Activated naive CD8-positive, alpha-beta T cell treated with anti-CD3 and anti-CD28 coated beads, Interleukin-2, amount 10 ng/mL, durations not matched to agents 7 days and 5 days (primary cell): ENCODE measurements at regions of chr1 and their contacts with region 1.

Region 1: DNA sequence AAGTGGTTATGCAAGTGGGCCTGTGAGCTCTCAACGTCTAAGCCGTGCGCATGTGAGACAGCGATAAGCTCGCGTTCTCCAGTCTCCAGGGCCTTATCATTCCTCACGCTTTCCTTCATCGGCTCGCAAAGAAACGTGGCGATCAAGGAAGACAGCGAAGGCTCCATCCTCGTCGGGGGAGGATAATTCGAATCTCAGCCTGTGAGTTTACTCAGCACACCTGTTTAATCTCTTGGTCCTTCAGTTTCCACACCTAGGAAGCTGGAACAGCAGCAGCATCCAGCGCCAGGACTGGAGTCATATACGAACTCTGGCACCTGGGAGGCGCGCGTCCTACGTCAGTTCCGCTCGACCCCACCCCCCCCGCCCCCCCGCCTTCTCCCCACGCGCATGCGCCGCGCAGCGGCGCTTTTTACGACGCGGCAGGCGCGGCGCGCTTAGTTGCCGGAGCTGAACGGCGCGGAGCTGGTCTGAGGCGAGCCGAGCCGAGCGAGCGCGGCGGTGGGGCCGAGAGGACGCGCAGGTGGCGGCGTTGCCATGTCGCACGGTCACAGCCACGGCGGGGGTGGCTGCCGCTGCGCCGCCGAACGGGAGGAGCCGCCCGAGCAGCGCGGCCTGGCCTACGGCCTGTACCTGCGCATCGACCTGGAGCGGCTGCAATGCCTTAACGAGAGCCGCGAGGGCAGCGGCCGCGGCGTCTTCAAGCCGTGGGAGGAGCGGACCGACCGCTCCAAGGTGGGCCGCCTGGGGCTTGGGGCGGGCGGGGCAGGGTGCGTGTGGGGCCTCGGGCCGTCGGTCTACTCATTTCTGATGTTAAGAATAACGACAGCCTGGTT is at the start of gene PITHD1:
- DNase-seq: peak; percentile 90
- ATAC-seq: peak; percentile 91
- H3K4me3 Mint-ChIP-seq: peak within 1 kb of the TSS; percentile 93
- H3K27ac Mint-ChIP-seq: peak within 1 kb of the TSS; percentile 95
- H3K4me1 Mint-ChIP-seq: peaks cover 41% of the 10 kb centered on the region
- H3K27me3 Mint-ChIP-seq: no peaks in the 10 kb centered on the region
- total RNA-seq, gene PITHD1: 64.0 to 64.5 TPM

Region 2: DNA sequence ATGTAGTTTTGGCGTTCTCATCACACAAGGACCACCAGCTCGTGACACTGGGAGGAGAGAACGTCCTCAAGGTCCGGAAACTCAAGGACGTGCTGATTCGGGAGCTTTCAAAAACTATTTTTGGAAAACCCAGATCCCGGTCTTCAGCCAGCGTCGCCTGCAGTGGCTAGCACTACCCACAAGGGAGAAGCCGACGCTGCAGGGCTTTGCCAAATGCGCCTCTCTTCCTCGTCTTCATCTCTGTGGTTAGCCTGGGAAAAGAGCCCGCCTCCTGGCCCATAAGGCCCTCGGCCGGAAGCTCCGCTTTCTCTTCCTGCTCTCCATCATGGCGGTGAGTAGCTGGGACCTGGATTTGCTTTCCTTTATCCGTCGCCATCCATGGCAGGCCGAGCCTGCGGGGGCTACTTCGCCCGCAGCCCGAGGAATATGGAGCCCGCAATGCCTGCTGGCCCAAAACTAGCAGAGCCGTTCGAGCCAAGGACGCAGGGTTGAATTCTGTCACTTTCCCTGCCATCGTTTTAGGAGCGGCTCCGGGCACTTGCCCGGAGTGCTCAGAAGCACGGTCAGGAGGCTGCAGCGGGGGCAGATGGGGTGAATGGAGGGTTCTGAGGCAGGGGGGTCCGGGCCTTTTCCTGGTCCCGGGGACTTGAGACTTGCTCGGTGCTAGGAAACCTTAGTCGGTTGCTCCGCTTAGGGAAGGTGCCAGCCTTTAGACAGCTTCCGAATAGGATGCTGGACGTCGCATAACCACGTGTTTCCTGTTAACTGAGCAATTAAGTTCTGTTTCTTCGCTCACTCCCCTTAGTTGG is 86.5 kb before region 1 on chr1 and contains the start of gene RPL11:
- POLR2A ChIA-PET with region 1: interaction called, 10 read pairs
- DNase-seq: peak; percentile 81
- ATAC-seq: peak; percentile 94
- H3K4me3 Mint-ChIP-seq: peak within 1 kb of the TSS; percentile 96
- H3K27ac Mint-ChIP-seq: peak within 1 kb of the TSS; percentile 89
- H3K4me1 Mint-ChIP-seq: peaks cover 42% of the 10 kb centered on the region
- H3K27me3 Mint-ChIP-seq: no peaks in the 10 kb centered on the region
- total RNA-seq, gene RPL11: 1,289 to 1,405 TPM

Region 3: GRCh38 chr1:23790696-23791515 is 12.7 kb after region 1 on chr1 and contains the start of gene LYPLA2:
- POLR2A ChIA-PET with region 1: interaction called, 62 read pairs
- DNase-seq: peak; percentile 87
- ATAC-seq: peak; percentile 92
- H3K4me3 Mint-ChIP-seq: peak within 1 kb of the TSS; percentile 98
- H3K27ac Mint-ChIP-seq: peak within 1 kb of the TSS; percentile 98
- H3K4me1 Mint-ChIP-seq: peaks cover 12% of the 10 kb centered on the region
- H3K27me3 Mint-ChIP-seq: no peaks in the 10 kb centered on the region
- total RNA-seq, gene LYPLA2: 67.0 to 82.5 TPM

Region 4: GRCh38 chr1:23800400-23801337 is 22.5 kb after region 1 on chr1 and contains the start of gene GALE:
- POLR2A ChIA-PET with region 1: interaction called, 17 read pairs
- DNase-seq: peak; percentile 97
- ATAC-seq: peak; percentile 89
- H3K4me3 Mint-ChIP-seq: peak within 1 kb of the TSS; percentile 99
- H3K27ac Mint-ChIP-seq: peak within 1 kb of the TSS; percentile 92
- H3K4me1 Mint-ChIP-seq: peaks cover 17% of the 10 kb centered on the region
- H3K27me3 Mint-ChIP-seq: no peaks in the 10 kb centered on the region
- total RNA-seq, gene GALE: 18.6 to 19.4 TPM